ENCODE measurements at regions of chr2 and their contacts with region 1.

Region 1: DNA sequence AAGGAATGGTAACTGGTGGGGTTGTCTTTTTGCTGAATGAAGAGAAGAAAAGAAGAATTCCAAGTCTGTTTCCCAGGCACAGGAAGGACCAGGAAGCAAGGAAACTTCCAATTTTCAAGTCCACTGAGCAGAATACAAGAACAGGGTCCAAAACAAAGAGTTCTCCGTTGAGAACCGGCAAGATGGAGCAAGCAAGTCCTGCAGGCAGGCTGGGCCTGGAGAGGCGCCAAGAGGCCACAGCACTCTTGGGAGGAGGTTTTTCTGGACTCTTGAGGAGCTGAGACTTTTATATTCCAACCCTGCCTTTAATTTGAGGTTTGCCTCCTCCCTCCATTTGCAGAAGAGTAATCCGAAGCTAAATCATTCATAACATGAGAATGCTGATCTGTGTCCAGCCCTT is 224.5 kb downstream of the IKZF2 start:
- DNase-seq: no peak
- H3K4me3 Mint-ChIP-seq: no peak overlapping the region
- H3K27ac Mint-ChIP-seq: peak overlapping the region; percentile 61
- H3K4me1 Mint-ChIP-seq: peaks cover 28% of the 10 kb centered on the region
- H3K27me3 Mint-ChIP-seq: no peaks in the 10 kb centered on the region
- CTCF ChIP-seq: no peak

Region 2: GRCh38 chr2:212626371-212626918 is 300.5 kb before region 1 on chr2:
- CTCF ChIA-PET with region 1: no interaction called
- POLR2A ChIA-PET with region 1: no interaction called
- intact Hi-C with region 1: no loop called
- DNase-seq: peak; percentile 20
- H3K4me3 Mint-ChIP-seq: no peak overlapping the region
- H3K27ac Mint-ChIP-seq: no peak overlapping the region
- H3K4me1 Mint-ChIP-seq: no peaks in the 10 kb centered on the region
- H3K27me3 Mint-ChIP-seq: no peaks in the 10 kb centered on the region
- CTCF ChIP-seq: no peak

Region 3: DNA sequence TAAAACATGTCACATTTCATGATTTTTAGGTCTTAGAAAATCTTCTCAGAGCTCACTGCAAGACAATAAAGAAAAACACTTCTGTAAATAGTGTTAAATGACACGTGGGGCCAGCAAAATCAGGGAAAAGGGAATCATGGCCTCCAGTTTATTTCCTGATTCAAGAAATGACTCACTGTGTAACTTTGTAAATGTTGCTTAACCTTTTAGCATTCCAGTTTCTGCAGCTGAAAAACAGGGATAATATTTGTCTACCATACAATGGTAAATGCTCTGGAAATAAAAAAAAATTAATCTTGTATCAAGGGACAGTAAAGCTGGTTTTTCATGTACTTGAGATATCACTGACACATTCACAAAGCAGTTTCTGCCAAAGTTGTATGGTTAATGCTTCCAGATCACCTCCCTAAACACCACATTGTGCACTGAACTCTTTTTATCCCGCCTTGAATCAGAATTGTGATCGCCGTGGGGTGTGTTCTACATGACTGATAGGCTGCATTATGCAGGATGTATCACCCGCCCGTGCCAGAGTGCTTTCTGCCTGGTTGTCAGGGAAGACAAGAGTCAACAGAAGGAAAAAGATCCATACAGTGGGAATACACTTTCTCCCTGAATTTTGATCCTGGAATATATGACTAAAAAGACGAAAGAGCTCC is 14.4 kb before region 1 on chr2:
- CTCF ChIA-PET with region 1: interaction called, 3 read pairs
- POLR2A ChIA-PET with region 1: interaction called, 17 read pairs
- intact Hi-C with region 1: no loop called
- DNase-seq: peak; percentile 82
- H3K4me3 Mint-ChIP-seq: peak overlapping the region; percentile 17
- H3K27ac Mint-ChIP-seq: peak overlapping the region; percentile 97
- H3K4me1 Mint-ChIP-seq: peaks cover 35% of the 10 kb centered on the region
- H3K27me3 Mint-ChIP-seq: no peaks in the 10 kb centered on the region
- CTCF ChIP-seq: no peak

Region 4: DNA sequence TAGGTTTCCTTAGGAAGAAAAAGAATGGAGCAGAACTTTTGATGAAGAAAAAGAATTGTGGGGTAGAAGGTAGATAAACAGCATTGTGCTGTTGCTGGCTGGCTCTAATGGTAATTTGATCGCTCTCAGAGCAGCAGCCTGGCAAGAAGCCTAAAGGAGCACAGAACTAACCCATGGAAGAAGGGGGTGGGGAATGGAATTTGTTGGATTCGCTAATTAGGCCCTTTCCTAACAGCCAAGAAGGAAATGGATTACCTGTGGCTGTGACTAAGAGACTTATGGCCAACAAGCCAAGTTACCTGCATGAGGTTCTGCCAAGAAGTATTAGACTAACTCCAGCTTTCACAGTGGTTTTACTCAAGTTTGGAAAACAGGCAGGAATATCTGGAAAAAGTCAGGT is 13.9 kb after region 1 on chr2:
- CTCF ChIA-PET with region 1: interaction called, 6 read pairs
- POLR2A ChIA-PET with region 1: interaction called, 12 read pairs
- intact Hi-C with region 1: no loop called
- DNase-seq: peak; percentile 96
- H3K4me3 Mint-ChIP-seq: peak overlapping the region; percentile 11
- H3K27ac Mint-ChIP-seq: peak overlapping the region; percentile 68
- H3K4me1 Mint-ChIP-seq: peaks cover 16% of the 10 kb centered on the region
- H3K27me3 Mint-ChIP-seq: no peaks in the 10 kb centered on the region
- CTCF ChIP-seq: no peak